ENCODE measurements at regions of chr19 and their contacts with region 1.

Region 1: DNA sequence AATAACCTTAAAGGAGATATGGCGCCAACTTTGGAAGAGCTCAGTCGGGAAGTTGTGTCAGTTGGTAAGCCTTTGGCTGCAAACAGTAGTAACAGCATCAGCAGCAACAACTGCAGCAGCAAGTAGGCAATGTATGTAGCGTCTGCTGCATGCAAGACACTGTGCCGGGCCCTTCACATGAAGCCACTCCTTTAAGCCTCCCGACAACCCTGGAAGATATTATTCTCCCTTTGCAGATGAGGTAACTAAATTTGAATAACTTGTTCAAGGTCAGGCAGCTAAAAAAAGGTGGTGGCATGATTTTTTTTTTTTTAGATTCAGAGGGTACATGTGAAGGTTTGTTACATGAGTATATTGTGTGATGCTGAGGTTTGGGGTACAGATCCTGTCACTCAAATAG is 19.7 kb downstream of the SIPA1L3 start:
- DNase-seq: no peak
- ATAC-seq: peak; percentile 9
- H3K4me3 Mint-ChIP-seq: peak overlapping the region; percentile 60
- H3K27ac Mint-ChIP-seq: peak overlapping the region; percentile 97
- H3K4me1 Mint-ChIP-seq: peaks cover 89% of the 10 kb centered on the region
- H3K27me3 Mint-ChIP-seq: no peaks in the 10 kb centered on the region
- CTCF ChIP-seq: no peak

Region 2: DNA sequence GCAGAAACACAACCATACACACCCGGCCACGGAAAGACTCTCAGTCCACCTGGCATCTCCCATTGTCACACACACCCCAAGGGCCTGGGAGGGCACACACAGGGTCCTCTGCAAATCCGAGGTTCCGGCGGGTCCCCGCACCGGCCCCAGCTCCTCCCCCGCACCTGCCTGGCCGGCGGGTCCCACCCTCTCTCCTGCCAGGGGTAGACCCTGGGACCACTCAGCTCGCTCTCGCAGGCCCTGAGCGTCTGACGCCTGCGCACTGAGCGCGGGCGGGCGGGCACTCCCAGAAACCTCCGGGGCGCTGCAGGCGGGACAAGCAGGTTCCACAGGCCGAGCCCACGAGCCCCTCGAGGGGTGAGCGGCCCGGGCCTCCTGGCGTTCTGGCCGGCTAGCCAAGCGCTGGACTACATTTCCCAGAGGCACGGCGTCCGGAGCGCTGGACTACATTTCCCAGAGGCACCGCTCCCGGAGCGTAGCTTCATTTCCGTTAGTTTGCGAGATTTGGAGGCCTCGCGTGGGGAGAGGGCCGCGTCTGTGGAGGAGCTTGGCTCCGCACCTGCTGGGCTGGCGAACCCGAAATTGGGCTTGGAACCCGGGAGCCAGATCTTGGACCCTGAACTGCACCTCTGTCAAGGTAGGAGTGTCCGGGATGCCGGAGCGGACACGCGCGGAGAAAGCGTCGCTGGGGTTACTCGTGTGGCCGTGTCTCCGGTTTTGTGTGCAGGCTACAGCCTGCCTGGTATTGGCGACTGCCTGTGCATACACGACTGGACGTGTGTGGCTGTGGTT is 848.6 kb before region 1 on chr19 and contains the start of gene ZNF420:
- CTCF ChIA-PET with region 1: no interaction called
- POLR2A ChIA-PET with region 1: no interaction called
- intact Hi-C with region 1: no loop called
- DNase-seq: peak; percentile 83
- ATAC-seq: peak; percentile 96
- H3K4me3 Mint-ChIP-seq: peak within 1 kb of the TSS; percentile 97
- H3K27ac Mint-ChIP-seq: peak within 1 kb of the TSS; percentile 92
- H3K4me1 Mint-ChIP-seq: peaks cover 32% of the 10 kb centered on the region
- H3K27me3 Mint-ChIP-seq: no peaks in the 10 kb centered on the region
- CTCF ChIP-seq: no peak
- total RNA-seq, gene ZNF420: 11.6 and 11.9 TPM in 2 replicates

Region 3: DNA sequence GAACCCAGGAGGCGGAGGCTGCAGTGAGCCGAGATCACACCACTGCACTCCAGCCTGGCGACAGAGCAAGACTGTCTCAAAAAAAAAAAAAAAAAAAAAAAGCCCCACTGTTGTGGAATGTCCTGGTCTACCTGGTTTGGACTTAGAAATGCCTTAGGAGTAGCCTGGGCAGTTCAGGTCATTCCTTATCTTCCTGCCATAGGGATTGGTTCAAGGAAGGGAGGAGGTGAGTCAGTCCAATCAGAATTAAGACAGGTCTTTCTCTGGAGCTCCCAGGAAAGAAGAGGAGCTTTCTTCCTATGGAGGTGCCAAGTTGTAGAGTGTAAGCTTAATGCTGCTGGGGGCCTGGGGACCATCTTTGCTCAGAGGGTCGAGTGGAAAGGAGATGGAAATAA is 25.1 kb after region 1 on chr19:
- CTCF ChIA-PET with region 1: interaction called, 4 read pairs
- POLR2A ChIA-PET with region 1: interaction called, 11 read pairs
- intact Hi-C with region 1: no loop called
- DNase-seq: no peak
- ATAC-seq: no peak
- H3K4me3 Mint-ChIP-seq: peak overlapping the region; percentile 72
- H3K27ac Mint-ChIP-seq: peak overlapping the region; percentile 90
- H3K4me1 Mint-ChIP-seq: peaks cover 86% of the 10 kb centered on the region
- H3K27me3 Mint-ChIP-seq: no peaks in the 10 kb centered on the region
- CTCF ChIP-seq: no peak

Region 4: DNA sequence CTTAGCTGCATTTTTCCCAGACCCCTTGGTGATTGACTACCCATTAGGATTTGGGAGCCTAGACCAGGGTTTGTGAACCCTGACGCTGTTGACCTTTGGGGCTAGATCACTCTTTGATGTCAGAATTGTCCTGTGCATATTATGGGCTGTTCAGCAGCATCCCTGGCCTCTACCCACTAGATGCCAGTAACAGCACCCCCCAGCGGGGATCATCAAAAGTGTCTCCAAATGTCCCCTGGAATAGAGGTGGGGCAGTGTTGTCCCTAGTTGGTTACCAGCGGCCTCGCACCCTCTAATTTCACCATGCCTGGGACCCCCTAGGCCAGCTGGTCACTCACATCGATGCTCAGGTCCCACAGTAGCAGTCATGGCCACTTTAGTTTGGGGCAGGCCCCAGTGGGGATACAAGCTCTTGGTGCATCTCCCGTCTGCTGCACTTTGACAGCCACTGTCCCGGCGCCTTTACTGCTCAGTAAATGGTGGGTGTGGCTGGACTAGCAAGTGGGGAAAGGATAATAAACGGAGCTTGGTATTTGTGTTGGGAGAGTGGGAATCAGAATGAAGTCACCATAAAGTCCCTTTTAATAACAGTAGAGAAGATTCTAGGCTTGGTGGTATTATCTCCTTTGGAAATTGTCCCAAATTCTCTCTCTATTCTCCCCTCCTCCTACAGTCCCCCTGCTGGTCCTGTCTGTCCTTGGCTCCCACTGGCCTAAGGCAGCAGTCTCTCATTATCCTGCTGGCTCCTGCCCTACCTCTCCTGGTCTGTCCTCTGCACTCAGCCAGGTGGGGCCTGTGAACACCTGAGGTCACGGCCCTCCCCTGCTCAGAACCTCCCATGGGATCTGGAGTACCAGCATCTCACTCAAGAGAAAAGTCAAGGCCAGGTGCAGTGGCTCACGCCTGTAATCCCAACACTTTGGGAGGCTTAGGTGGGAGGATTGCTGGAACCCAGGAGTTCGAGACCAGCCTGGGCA is 60.9 kb after region 1 on chr19:
- CTCF ChIA-PET with region 1: no interaction called
- POLR2A ChIA-PET with region 1: interaction called, 11 read pairs
- intact Hi-C with region 1: no loop called
- DNase-seq: no peak
- ATAC-seq: no peak
- H3K4me3 Mint-ChIP-seq: no peak overlapping the region
- H3K27ac Mint-ChIP-seq: peak overlapping the region; percentile 96
- H3K4me1 Mint-ChIP-seq: peaks cover 86% of the 10 kb centered on the region
- H3K27me3 Mint-ChIP-seq: no peaks in the 10 kb centered on the region
- CTCF ChIP-seq: no peak